Spleen (tissue), 13 donors: ENCODE measurements at regions of chr10 and their contacts with region 1.

Region 1: GRCh38 chr10:6014241-6014761 is 37.0 kb upstream of the IL15RA start:
- DNase-seq: no peak
- H3K4me3 ChIP-seq: no peak overlapping the region
- H3K27ac ChIP-seq: peak overlapping the region in 5 of 8 donors; percentile 13 to 69 (median 38)
- H3K4me1 ChIP-seq: peaks cover 0 to 31% (median 13%) of the 10 kb centered on the region in 6 donors
- H3K27me3 ChIP-seq: no peaks in the 10 kb centered on the region
- CTCF ChIP-seq: peak; percentile 48 to 88 (median 80)
- POLR2A ChIP-seq: no peak

Region 2: DNA sequence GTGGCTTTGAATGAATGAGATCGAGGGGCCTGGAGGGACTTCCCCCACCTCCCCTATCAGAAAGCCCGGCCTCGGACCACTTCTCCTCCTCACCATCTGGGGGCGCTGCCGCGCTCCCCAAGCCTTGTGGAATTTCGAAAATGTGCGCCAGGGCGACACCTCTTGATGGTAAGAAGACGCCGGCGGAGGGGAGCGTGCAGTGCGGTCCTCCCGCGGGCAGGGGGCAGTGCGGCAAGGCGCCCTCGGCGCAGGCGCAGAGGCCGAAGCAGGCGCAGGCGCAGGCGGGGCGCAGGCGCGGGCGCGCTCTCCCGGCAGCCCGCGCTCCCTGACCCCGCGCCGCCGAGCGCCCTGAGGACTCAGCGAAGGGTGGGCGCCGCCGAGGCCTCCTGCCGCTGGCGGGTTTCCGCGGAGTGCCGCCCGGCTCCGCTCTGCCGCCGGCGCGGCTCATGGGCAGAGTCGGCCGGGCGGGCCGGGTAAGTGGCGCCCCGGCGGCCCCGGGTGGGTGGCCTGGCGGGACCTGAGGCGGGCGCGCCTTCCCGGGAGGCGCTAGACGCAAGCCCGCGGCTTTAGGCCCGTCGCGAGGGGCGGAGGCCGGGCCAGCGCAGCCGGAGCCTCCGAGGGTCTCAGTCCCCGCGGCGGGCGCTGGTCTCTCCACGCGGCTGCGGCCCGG is 74.6 kb after region 1 on chr10 and contains the start of gene RBM17:
- intact Hi-C with region 1: loop called (anchors 5 kb)
- DNase-seq: peak; percentile 99
- H3K4me3 ChIP-seq: peak within 1 kb of the TSS; percentile 62 to 94 (median 82)
- H3K27ac ChIP-seq: peak within 1 kb of the TSS; percentile 69 to 97 (median 92)
- H3K4me1 ChIP-seq: peaks cover 39 to 82% (median 69%) of the 10 kb centered on the region in 6 donors
- H3K27me3 ChIP-seq: no peaks in the 10 kb centered on the region
- CTCF ChIP-seq: peak; percentile 99 to 100 (median 100)
- POLR2A ChIP-seq: peak in 1 of 3 donors; percentile 4
- total RNA-seq, gene RBM17: 93.2 to 140 (median 120) TPM

Region 3: GRCh38 chr10:6401562-6402348 is 387.5 kb after region 1 on chr10:
- intact Hi-C with region 1: loop called (anchors 10 kb)
- DNase-seq: peak; percentile 85
- H3K4me3 ChIP-seq: peak overlapping the region in 5 of 8 donors; percentile 2 to 48 (median 11)
- H3K27ac ChIP-seq: peak overlapping the region in 7 of 8 donors; percentile 33 to 89 (median 83)
- H3K4me1 ChIP-seq: peaks cover 5 to 53% (median 28%) of the 10 kb centered on the region in 6 donors
- H3K27me3 ChIP-seq: no peaks in the 10 kb centered on the region
- CTCF ChIP-seq: peak; percentile 71 to 92 (median 84)
- POLR2A ChIP-seq: no peak